Stomach (tissue), 19 donors: ENCODE measurements at regions of chr21 and their contacts with region 1.

Region 1: GRCh38 chr21:45554477-45555175 is 12.4 kb upstream of the SLC19A1 start:
- DNase-seq: peak; percentile 86 to 95
- H3K4me3 ChIP-seq: peak overlapping the region; percentile 50 to 66 (median 60)
- H3K27ac ChIP-seq: peak overlapping the region; percentile 62 to 84 (median 81)
- H3K4me1 ChIP-seq: peaks cover 6 to 38% (median 23%) of the 10 kb centered on the region in 4 donors
- H3K27me3 ChIP-seq: peaks cover 0 to 35% (median 0%) of the 10 kb centered on the region in 3 donors
- CTCF ChIP-seq: peak in 6 of 7 experiments; percentile 43 to 90 (median 84)
- EP300 ChIP-seq: no peak
- POLR2A ChIP-seq: no peak

Region 2: GRCh38 chr21:45584786-45585185 is 30.2 kb after region 1 on chr21:
- intact Hi-C with region 1: no loop called
- DNase-seq: peak in 1 of 2 donors; percentile 10
- H3K4me3 ChIP-seq: no peak overlapping the region
- H3K27ac ChIP-seq: no peak overlapping the region
- H3K4me1 ChIP-seq: peaks cover 1 to 3% (median 2%) of the 10 kb centered on the region in 4 donors
- H3K27me3 ChIP-seq: peaks cover 0 to 57% (median 11%) of the 10 kb centered on the region in 3 donors
- CTCF ChIP-seq: no peak
- EP300 ChIP-seq: no peak
- POLR2A ChIP-seq: no peak

Region 3: GRCh38 chr21:45596704-45597318 is 42.2 kb after region 1 on chr21:
- intact Hi-C with region 1: loop called (anchors 5 kb)
- DNase-seq: peak; percentile 81 to 87
- H3K4me3 ChIP-seq: no peak overlapping the region
- H3K27ac ChIP-seq: no peak overlapping the region
- H3K4me1 ChIP-seq: peaks cover 0 to 10% (median 4%) of the 10 kb centered on the region in 4 donors
- H3K27me3 ChIP-seq: peaks cover 0 to 31% (median 4%) of the 10 kb centered on the region in 3 donors
- CTCF ChIP-seq: peak in 5 of 7 experiments; percentile 71 to 88 (median 78)
- EP300 ChIP-seq: no peak
- POLR2A ChIP-seq: no peak

Region 4: DNA sequence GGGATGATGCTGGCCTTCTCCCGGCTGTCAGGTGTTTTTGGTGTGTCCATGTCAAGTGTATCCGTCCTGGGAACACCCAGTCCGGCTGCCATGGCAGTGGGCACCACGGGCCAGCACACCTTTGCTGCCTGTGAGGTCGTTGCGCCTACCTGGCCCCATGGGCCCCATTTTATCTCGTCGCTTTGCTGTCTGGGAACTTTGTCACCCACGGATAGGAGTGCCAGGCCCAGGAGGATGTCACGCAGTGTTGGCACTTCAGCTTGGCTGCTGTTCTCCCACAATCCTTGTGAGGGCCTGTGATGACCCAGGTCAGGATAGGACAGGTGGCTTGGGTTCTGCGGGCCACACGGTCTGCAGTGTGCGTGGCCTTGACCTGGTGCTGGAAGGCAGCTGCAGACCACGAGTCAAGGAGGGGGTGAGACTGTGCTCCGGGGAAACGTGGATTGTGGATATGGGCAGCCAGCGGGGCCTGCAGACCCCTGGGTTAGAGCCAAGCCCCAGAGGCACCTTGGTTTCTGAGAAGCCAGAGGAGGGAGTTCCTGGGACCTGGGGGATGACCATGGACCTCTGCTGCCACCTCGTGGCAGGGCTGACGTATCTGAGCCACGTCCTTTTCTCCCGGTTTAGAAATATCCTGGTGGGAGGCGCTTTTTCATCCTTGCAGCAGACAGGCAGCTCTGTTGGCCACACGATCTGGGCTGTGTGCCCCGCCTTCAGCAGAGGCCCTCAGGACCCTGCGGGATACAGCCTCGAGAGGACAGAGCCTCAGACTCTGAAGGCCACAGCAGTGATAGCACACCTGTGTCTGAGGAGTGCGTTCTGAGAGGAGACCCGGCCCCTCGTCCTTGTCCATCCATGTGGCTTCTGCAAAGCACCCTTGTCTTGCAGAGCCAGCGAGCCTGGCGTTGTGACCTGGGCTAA is 265.8 kb after region 1 on chr21:
- intact Hi-C with region 1: loop called (anchors 5 kb)
- DNase-seq: peak; percentile 75 to 95
- H3K4me3 ChIP-seq: no peak overlapping the region
- H3K27ac ChIP-seq: no peak overlapping the region
- H3K4me1 ChIP-seq: peaks cover 0 to 20% (median 3%) of the 10 kb centered on the region in 4 donors
- H3K27me3 ChIP-seq: peaks cover 0 to 43% (median 6%) of the 10 kb centered on the region in 3 donors
- CTCF ChIP-seq: peak in 5 of 7 experiments; percentile 47 to 82 (median 74)
- EP300 ChIP-seq: no peak
- POLR2A ChIP-seq: no peak